GM12878 (cell line): ENCODE measurements at regions of chr18 and their contacts with region 1.

Region 1: DNA sequence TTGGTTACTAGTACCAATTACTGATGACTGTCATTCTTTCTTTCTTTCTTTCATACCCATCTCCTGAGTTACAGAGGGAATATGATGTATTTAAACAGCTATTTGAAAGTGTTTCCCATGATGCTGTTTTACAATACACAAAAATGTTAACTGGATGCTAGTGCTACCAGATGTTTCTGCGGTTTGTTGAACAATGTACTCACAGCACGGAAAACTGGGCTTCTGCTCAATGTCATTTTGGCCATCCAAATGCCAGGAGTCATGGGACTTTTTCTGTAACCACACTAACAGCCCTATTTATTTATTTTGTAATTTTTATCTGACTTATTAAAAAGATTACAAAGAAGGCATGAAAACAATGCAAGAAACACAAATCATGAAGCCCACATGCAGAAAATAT is 313.8 kb downstream of the RIT2 start:
- DNase-seq: no peak
- ATAC-seq: no peak
- H3K4me3 ChIP-seq: no peak overlapping the region
- H3K27ac ChIP-seq: no peak overlapping the region
- H3K4me1 ChIP-seq: no peaks in the 10 kb centered on the region
- H3K27me3 ChIP-seq: no peaks in the 10 kb centered on the region
- CTCF ChIP-seq: no peak
- EP300 ChIP-seq: no peak
- POLR2A ChIP-seq: no peak
- RAD21 ChIP-seq: no peak

Region 2: DNA sequence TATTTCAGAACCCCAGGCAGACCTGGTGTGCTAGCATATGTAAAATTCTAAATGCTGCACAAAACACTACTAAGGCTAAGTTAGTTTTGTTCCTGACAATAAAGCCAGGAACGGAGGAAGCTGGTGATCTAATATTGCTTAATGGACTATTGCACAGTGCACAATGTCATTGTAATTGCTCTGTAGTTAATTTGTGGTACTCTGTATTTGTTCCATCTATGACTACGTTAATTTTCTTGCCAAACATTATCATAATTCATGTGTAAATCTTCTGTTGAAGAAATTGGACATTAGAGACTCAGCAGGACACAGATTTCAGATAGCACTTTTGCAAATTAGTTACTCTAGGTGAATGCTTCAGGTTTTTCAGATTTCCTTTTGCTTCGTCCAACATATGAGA is 81.5 kb after region 1 on chr18:
- CTCF ChIA-PET with region 1: no interaction called
- POLR2A ChIA-PET with region 1: interaction called, 10 read pairs
- RAD21 ChIA-PET with region 1: no interaction called
- SMC1A ChIA-PET with region 1: no interaction called
- in situ Hi-C with region 1: no loop called
- intact Hi-C with region 1: no loop called
- DNase-seq: no peak
- ATAC-seq: no peak
- H3K4me3 ChIP-seq: no peak overlapping the region
- H3K27ac ChIP-seq: no peak overlapping the region
- H3K4me1 ChIP-seq: no peaks in the 10 kb centered on the region
- H3K27me3 ChIP-seq: no peaks in the 10 kb centered on the region
- CTCF ChIP-seq: no peak
- EP300 ChIP-seq: no peak
- POLR2A ChIP-seq: no peak
- RAD21 ChIP-seq: no peak